A673 (cell line): ENCODE measurements at regions of chr11 and their contacts with region 1.

Region 1: GRCh38 chr11:40175980-40176379 is 1283.5 kb downstream of the LRRC4C start:
- DNase-seq: no peak
- H3K4me3 ChIP-seq: no peak overlapping the region
- H3K27ac ChIP-seq: no peak overlapping the region
- H3K4me1 ChIP-seq: no peaks in the 10 kb centered on the region
- H3K27me3 ChIP-seq: no peaks in the 10 kb centered on the region
- CTCF ChIP-seq: no peak

Region 2: DNA sequence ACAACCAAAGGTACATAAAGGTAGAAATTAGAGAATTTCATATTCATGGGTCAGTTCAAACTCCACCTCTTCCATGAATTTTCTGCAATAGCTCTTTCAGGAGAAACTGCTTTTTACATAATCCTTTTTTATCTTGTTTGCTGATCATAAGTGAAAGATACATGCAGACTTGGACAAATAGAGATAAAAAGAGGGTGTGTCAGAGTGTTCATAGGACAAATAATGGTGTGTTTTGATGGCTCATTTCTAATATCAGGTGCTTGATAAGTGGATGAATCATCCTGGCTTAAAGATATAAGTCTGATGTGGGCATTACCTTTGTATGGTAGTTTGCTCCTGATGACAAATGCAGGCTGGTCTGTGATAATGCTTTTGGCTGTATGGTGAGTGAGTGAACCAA is 686.0 kb before region 1 on chr11:
- CTCF ChIA-PET with region 1: no interaction called
- POLR2A ChIA-PET with region 1: interaction called, 18 read pairs
- intact Hi-C with region 1: no loop called
- DNase-seq: no peak
- H3K4me3 ChIP-seq: no peak overlapping the region
- H3K27ac ChIP-seq: no peak overlapping the region
- H3K4me1 ChIP-seq: no peaks in the 10 kb centered on the region
- H3K27me3 ChIP-seq: no peaks in the 10 kb centered on the region
- CTCF ChIP-seq: no peak

Region 3: DNA sequence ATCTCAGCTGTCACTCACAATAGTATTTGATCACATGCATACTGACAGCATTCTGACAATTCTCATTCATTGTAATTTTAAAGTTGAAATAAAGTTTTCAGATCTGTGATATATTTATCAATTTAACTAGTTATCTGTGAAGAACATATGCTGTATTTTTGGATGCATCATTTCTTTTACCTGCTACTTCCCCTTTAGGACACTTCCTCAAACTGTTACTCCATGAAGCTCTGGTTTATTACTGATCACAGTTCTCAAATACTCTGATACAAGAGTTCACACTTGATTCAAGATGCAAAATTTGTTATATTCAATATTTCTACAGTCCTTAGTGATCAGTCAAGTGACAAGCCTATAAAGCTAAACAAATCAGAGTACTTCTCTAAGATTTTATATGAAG is 371.7 kb before region 1 on chr11:
- CTCF ChIA-PET with region 1: no interaction called
- POLR2A ChIA-PET with region 1: no interaction called
- intact Hi-C with region 1: no loop called
- DNase-seq: no peak
- H3K4me3 ChIP-seq: no peak overlapping the region
- H3K27ac ChIP-seq: no peak overlapping the region
- H3K4me1 ChIP-seq: no peaks in the 10 kb centered on the region
- H3K27me3 ChIP-seq: no peaks in the 10 kb centered on the region
- CTCF ChIP-seq: no peak